IMR-90 (cell line): ENCODE measurements at regions of chr5 and their contacts with region 1.

Region 1: GRCh38 chr5:79149432-79149831 is 37.8 kb downstream of the BHMT start:
- DNase-seq: peak; percentile 39
- ATAC-seq: peak; percentile 14; the same call in 1 of the 2 replicates
- H3K4me3 ChIP-seq: no peak overlapping the region
- H3K27ac ChIP-seq: no peak overlapping the region
- H3K4me1 ChIP-seq: peaks cover 2% of the 10 kb centered on the region; the same call in 1 of the 2 replicates
- H3K27me3 ChIP-seq: no peaks in the 10 kb centered on the region
- CTCF ChIP-seq: no peak
- POLR2A ChIP-seq: no peak
- RAD21 ChIP-seq: no peak

Region 2: GRCh38 chr5:79378510-79379186 is 229.2 kb after region 1 on chr5:
- CTCF ChIA-PET with region 1: no interaction called
- POLR2A ChIA-PET with region 1: no interaction called
- dilution Hi-C with region 1: no loop called
- in situ Hi-C with region 1: no loop called
- intact Hi-C with region 1: no loop called
- DNase-seq: no peak
- ATAC-seq: no peak
- H3K4me3 ChIP-seq: no peak overlapping the region
- H3K27ac ChIP-seq: no peak overlapping the region
- H3K4me1 ChIP-seq: no peaks in the 10 kb centered on the region
- H3K27me3 ChIP-seq: no peaks in the 10 kb centered on the region
- CTCF ChIP-seq: no peak
- POLR2A ChIP-seq: no peak
- RAD21 ChIP-seq: no peak

Region 3: DNA sequence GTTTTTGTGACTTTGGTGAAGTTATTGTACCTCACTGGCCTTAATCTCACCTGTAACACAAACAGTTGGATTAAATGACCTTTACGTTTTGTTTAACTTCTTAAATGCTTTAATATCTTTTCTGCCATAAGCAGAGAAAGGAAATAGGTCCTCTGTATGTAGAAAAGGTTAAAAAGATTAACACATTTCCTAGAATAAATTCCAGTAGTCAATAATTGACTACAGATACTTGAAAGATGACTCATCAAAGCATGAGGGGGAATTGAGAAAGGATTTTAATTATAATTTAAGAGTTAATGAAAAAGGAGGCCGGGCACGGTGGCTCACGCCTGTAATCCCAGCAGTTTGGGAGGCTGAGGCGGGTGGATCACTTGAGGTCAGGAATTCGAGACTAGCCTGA is 504.4 kb after region 1 on chr5:
- CTCF ChIA-PET with region 1: no interaction called
- POLR2A ChIA-PET with region 1: no interaction called
- dilution Hi-C with region 1: no loop called
- in situ Hi-C with region 1: no loop called
- intact Hi-C with region 1: no loop called
- DNase-seq: no peak
- ATAC-seq: no peak
- H3K4me3 ChIP-seq: no peak overlapping the region
- H3K27ac ChIP-seq: no peak overlapping the region
- H3K4me1 ChIP-seq: no peaks in the 10 kb centered on the region; the same call in 1 of the 2 replicates
- H3K27me3 ChIP-seq: no peaks in the 10 kb centered on the region
- CTCF ChIP-seq: no peak
- POLR2A ChIP-seq: no peak
- RAD21 ChIP-seq: no peak

Region 4: DNA sequence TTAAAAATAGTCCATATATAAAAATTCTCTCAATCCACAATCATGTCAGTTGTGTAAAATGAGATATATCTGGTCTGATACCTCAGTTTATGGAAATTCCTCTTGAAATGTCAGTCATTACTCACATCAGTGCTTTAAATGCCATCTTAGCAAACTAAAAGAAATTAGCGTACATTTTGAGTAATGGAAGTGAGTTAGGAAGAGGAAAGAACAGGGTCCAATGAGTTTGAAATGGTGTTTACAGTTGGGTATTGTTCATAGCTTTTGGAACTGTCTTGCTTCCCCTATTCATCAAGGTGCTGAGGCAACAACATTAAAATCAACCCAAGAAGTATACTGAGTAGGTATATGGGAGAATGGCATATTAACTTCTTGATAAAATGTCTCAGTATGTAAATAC is 850.3 kb after region 1 on chr5:
- CTCF ChIA-PET with region 1: no interaction called
- POLR2A ChIA-PET with region 1: no interaction called
- dilution Hi-C with region 1: no loop called
- in situ Hi-C with region 1: no loop called
- intact Hi-C with region 1: loop called (anchors 5 kb)
- DNase-seq: no peak
- ATAC-seq: no peak
- H3K4me3 ChIP-seq: no peak overlapping the region
- H3K27ac ChIP-seq: no peak overlapping the region
- H3K4me1 ChIP-seq: no peaks in the 10 kb centered on the region
- H3K27me3 ChIP-seq: no peaks in the 10 kb centered on the region
- CTCF ChIP-seq: no peak
- POLR2A ChIP-seq: no peak
- RAD21 ChIP-seq: no peak